Aorta (tissue), 5 donors: ENCODE measurements at regions of chrX and their contacts with region 1.

Region 1: DNA sequence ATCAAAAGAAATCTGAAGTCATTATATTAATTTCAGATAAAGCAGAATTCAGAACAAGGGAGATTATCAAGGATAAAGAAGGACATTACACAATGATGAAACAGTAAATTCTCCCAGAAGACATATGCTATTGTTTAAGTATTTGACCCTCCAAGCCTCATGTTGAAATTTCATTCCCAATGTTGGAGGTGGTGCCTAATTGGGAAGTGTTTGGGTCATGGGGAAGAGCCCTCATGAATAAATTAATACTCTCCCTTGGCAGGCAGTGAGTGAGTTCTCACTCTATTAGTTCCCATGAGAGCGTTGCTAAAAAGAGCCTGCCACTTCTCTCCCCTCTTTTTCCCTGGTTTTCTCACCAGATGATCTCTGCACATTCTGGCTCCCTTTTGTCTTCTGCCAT is 249.9 kb upstream of the GRIA3 start:
- DNase-seq: no peak
- ATAC-seq: no peak
- H3K4me3 ChIP-seq: no peak overlapping the region
- H3K27ac ChIP-seq: no peak overlapping the region
- H3K4me1 ChIP-seq: no peaks in the 10 kb centered on the region
- H3K27me3 ChIP-seq: no peaks in the 10 kb centered on the region

Region 2: DNA sequence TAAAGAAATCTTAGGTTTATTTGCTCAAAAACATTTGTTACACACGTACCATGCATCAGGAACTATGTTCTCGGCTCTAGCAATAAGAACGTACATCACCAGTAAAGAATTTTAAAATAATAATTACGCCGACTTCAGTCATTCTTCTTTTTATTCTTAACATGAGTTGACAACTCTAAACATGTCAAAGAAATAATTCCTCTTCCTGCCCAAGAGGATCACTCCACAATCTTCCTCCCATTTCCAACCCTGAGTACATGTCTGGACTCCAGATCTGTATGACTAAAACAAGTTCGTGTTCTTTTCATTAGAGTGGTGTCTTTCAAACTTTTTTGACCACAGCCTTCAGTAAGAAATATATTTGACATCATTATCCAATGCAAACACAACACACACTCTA is 48.4 kb after region 1 on chrX:
- intact Hi-C with region 1: loop called in 1 of 2 experiments (anchors 10 kb)
- DNase-seq: no peak
- ATAC-seq: no peak
- H3K4me3 ChIP-seq: no peak overlapping the region
- H3K27ac ChIP-seq: no peak overlapping the region
- H3K4me1 ChIP-seq: no peaks in the 10 kb centered on the region
- H3K27me3 ChIP-seq: no peaks in the 10 kb centered on the region